Gastrocnemius medialis (tissue), 4 donors: ENCODE measurements at regions of chr4 and their contacts with region 1.

Region 1: GRCh38 chr4:26410385-26411293 is 79.6 kb downstream of the CCKAR start:
- DNase-seq: no peak
- ATAC-seq: peak; percentile 58 to 84
- H3K4me3 ChIP-seq: no peak overlapping the region
- H3K27ac ChIP-seq: no peak overlapping the region
- H3K4me1 ChIP-seq: peaks cover 13% of the 10 kb centered on the region in 2 donors
- H3K27me3 ChIP-seq: no peaks in the 10 kb centered on the region
- CTCF ChIP-seq: peak; percentile 35 to 70 (median 63)
- POLR2A ChIP-seq: no peak

Region 2: DNA sequence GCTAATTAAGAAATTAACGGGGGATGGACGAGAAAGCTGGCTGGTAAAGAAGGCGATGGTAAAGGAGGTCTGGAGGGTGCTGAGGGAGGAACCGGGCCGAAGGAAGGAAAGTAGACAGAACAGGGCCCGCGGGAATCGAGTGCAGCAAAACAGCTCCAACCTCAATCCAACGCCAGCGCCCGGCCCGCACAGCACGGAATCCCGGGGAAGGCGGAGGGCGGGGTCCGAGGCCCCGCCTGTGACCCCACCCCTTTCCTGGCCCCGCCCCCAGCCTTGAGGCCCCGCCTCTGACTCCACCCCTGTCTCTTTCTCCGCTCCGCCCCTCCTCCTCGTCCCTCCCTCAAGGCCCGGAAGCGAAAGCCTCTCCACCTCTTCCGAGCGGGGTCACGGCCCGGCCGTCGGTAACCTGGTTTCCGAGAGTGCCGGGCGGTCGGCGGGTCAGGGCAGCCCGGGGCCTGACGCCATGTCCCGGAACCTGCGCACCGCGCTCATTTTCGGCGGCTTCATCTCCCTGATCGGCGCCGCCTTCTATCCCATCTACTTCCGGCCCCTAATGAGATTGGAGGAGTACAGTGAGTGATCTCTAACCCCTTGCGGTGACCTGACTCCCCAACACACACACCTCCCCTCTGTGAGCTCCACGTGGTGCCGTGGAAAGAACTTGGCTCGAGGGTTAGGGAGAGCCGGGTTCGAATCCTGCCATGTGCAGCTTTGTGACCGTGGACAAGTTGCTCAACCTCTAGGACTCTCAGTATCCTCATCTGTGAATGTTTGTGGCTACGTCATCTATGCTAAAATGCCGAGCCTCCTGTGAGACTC is 496.6 kb before region 1 on chr4 and contains the start of gene SMIM20:
- in situ Hi-C with region 1: loop called in 1 of 4 experiments (anchors 25 kb)
- intact Hi-C with region 1: no loop called
- DNase-seq: peak; percentile 90 to 93
- ATAC-seq: peak; percentile 96 to 97
- H3K4me3 ChIP-seq: peak within 1 kb of the TSS; percentile 72 to 83 (median 76)
- H3K27ac ChIP-seq: peak within 1 kb of the TSS; percentile 87 to 97 (median 90)
- H3K4me1 ChIP-seq: peaks cover 14 to 15% of the 10 kb centered on the region in 2 donors
- H3K27me3 ChIP-seq: no peaks in the 10 kb centered on the region
- CTCF ChIP-seq: no peak
- POLR2A ChIP-seq: peak; percentile 77 to 78
- total RNA-seq, gene SMIM20: 36.4 to 59.4 (median 48.3) TPM

Region 3: DNA sequence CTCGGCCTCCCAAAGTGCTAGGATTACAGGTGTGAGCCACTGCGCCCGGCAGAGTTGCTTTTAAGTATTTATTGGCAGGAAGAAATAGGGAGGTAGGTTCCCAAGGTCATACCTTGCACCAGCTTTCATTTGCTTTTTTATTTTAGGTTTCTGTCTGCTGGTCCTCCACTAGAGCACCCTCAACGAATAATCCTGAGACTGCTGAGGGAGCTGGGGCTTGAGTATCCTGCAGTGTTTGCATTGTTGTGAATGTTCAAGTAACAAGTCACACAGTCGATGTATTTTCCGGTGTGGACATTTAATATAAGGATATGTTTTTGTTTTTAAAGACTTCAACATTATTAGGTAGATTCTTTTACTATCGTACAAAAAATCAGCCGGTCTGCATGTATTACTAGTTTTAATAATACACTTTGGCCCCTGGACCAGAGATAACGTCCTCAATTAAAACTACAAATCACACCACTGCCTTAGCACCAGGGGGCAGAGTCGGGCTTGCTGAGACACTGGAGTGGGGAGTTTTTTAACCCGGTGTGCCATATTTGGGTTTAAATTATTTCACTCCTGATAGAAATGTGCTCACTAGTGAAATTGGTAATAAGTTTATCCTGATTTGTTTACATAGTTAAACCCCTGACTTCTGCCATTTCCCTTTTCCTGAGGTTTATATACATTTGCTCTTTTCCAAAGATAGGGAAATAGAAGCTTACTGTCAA is 485.0 kb before region 1 on chr4:
- in situ Hi-C with region 1: loop called in 1 of 4 experiments (anchors 25 kb)
- intact Hi-C with region 1: loop called (anchors 5 kb)
- DNase-seq: no peak
- ATAC-seq: no peak
- H3K4me3 ChIP-seq: no peak overlapping the region
- H3K27ac ChIP-seq: no peak overlapping the region
- H3K4me1 ChIP-seq: peaks cover 54 to 65% of the 10 kb centered on the region in 2 donors
- H3K27me3 ChIP-seq: no peaks in the 10 kb centered on the region
- CTCF ChIP-seq: peak in 4 of 5 experiments; percentile 16 to 44 (median 30)
- POLR2A ChIP-seq: no peak

Region 4: DNA sequence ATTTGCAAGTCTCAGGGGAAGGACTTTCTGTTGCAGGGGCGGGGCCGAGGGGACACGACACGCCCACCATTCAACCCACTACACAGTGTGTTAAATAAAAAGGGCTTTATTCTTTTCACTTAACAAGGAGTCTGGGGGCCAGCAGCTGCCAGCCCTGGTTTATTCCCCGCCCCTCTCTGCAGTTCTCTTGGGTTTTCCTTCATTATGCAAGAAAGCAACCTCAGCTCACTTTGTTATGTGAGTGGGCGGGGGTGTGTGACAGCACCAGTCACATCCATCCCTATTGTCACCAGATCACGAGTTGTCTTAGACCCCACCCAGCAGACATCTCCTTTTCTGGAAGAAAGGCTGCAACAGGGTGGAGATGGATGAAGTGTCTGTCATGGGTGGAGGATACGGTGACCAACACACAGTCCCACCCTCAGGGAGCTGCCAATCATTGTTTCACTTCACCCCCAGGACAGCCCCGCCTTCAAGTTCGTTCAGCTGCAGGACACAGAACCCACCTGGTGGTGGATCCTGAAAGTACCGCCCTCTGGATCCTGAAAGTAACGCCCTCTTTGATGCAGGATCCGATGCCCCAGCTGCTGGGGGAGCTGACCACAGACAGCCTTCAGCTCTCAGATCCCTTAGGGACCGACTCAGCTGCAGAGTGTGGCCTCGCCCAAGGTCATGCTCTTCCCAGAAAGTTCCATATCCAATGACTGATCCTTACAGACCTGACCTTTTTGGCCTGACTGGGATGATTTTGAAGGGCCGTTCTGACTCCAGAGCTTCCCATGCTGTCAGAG is 417.0 kb before region 1 on chr4:
- in situ Hi-C with region 1: loop called in 3 of 4 experiments (anchors 10 to 25 kb)
- intact Hi-C with region 1: loop called (anchors 1 kb)
- DNase-seq: peak in 1 of 2 donors; percentile 41
- ATAC-seq: peak; percentile 52 to 68
- H3K4me3 ChIP-seq: no peak overlapping the region
- H3K27ac ChIP-seq: no peak overlapping the region
- H3K4me1 ChIP-seq: peaks cover 4% of the 10 kb centered on the region in 2 donors
- H3K27me3 ChIP-seq: no peaks in the 10 kb centered on the region
- CTCF ChIP-seq: no peak
- POLR2A ChIP-seq: no peak

Region 5: GRCh38 chr4:26081795-26082498 is 328.7 kb before region 1 on chr4:
- in situ Hi-C with region 1: loop called (anchors 10 kb)
- intact Hi-C with region 1: loop called (anchors 2 kb)
- DNase-seq: no peak
- ATAC-seq: peak in 1 of 2 donors; percentile 35
- H3K4me3 ChIP-seq: no peak overlapping the region
- H3K27ac ChIP-seq: no peak overlapping the region
- H3K4me1 ChIP-seq: peaks cover 29 to 35% of the 10 kb centered on the region in 2 donors
- H3K27me3 ChIP-seq: no peaks in the 10 kb centered on the region
- CTCF ChIP-seq: peak; percentile 22 to 67 (median 63)
- POLR2A ChIP-seq: no peak

Region 6: DNA sequence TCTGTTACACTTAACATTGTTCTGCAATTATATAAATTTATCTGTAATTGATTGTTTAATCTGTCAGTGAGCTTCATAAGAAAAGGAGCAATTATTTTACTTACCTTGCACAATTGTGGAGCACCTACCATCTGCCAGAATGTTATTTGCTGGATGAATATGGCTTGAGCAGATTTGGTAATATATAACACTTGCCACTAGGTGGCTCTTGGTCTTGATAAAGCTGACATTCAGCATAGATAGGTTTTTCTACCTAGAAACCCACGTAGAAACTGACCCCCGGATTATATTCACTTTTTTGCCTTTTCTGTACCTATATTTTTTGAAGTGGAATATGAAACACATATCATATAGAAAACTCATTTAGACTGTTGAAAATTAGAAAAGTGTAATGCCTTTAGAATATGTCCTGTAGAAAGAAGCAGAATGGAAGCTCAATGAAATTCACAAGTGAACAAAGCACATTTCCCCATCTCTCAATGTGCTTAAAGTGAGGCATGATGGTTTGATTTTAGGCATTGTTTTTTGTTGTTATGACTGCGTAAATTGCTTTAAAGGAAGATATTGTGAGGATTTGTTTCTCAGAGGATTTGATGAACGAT is 80.4 kb before region 1 on chr4:
- in situ Hi-C with region 1: loop called in 2 of 4 experiments (anchors 5 to 10 kb)
- intact Hi-C with region 1: loop called (anchors 1 kb)
- DNase-seq: no peak
- ATAC-seq: peak; percentile 67 to 77
- H3K4me3 ChIP-seq: no peak overlapping the region
- H3K27ac ChIP-seq: no peak overlapping the region
- H3K4me1 ChIP-seq: peaks cover 29 to 55% of the 10 kb centered on the region in 2 donors
- H3K27me3 ChIP-seq: no peaks in the 10 kb centered on the region
- CTCF ChIP-seq: peak; percentile 62 to 75 (median 67)
- POLR2A ChIP-seq: no peak

Region 7: DNA sequence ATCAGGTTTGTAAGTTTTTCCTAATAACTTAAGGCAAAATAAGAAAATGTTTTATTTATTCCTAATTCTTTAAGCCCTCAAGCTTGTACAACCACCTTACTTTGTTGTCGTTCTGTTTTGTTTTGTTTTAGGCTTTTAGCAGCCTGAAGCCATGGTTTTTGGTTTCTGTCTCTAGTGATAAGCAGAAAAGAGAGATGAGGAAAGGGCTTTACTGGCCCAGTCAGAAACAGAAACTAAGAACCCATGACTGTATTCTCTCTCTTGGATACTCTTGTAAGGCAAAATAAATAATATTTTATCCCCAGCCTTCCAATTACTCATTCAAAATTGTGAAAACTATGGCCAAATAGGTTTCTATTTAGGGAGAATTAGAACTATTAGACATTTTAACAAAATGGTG is 202.6 kb after region 1 on chr4:
- in situ Hi-C with region 1: no loop called
- intact Hi-C with region 1: no loop called
- DNase-seq: no peak
- ATAC-seq: no peak
- H3K4me3 ChIP-seq: no peak overlapping the region
- H3K27ac ChIP-seq: no peak overlapping the region
- H3K4me1 ChIP-seq: peaks cover 0 to 10% of the 10 kb centered on the region in 2 donors
- H3K27me3 ChIP-seq: no peaks in the 10 kb centered on the region
- CTCF ChIP-seq: no peak
- POLR2A ChIP-seq: no peak